ENCODE measurements at regions of chr13 and their contacts with region 1.

Region 1: DNA sequence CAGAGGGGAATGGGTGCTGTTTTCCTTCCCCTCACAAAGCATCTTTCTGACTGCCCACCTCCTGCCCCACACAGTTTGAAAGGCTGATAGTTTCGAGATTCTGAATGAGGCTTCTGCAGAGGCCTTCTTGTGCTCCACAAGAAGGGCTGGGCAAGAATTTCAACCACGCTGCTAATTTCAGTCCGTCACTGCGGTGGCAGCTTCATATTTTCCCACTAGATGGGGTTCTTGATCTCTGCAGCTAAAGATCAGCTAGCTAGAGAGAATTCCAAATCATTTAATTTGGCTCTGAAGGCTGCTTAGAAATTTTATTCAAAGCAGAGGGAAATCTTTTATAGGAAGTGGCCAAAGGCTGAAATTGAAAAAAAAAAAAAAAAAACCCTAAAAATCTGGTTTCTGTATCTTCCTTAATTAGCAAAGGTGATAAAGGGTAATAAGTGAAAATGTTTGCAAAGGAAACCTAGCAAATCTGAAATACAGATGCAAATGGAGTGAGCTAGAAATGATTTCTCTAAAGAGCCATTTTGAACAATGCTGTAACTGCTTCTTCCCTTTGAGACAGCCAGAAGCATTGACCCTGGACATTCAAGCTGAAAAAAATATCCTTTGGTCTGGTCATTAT is 38.0 kb upstream of the C13orf42 start:
- DNase-seq: peak; percentile 45
- ATAC-seq: peak; percentile 90
- H3K4me3 ChIP-seq: no peak overlapping the region
- H3K27ac ChIP-seq: no peak overlapping the region
- H3K4me1 ChIP-seq: no peaks in the 10 kb centered on the region
- H3K27me3 ChIP-seq: peaks cover 24% of the 10 kb centered on the region
- CTCF ChIP-seq: peak; percentile 76
- POLR2A ChIP-seq: no peak
- RAD21 ChIP-seq: peak; percentile 75

Region 2: DNA sequence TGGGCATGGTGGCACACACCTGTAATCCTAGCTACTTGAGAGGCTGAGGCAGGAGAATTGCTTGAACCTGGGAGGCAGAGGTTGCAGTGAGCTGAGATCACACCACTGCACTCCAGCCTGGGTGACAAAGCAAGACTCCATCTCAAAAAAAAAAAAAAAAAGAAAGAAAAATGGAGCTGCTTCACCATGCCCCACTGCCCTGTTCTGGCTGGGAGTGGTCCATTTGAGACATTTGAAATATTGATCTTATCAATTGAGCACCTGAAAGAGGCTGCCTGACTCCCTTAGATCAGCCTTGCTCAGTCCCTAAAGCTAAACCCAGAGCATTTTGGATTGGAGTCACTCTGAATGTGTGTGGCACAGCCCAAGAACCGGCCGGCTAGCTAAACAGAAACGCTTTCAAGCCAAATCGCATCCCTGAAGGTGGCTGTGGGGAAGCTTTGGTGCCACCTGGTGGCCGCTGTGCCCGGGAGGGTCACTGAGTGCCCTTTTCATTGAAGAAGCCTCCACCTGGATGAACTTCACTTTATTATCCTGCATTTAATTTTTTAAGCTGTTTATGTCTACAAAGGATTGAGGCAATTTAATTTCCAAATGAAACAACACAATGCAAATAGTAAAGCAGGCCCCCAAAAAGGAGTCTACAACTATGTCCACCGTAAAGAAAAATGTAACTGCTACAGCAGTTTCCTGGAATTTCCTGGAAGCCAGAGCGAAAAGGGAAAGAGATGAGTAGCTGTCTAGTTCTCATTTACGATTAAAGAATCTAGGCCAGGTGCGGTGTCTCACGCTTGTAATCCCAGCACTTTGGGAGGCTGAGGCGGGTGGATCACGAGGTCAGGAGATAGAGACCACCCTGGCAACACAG is 137.3 kb after region 1 on chr13:
- CTCF ChIA-PET with region 1: interaction called, 37 read pairs
- POLR2A ChIA-PET with region 1: no interaction called
- dilution Hi-C with region 1: no loop called
- in situ Hi-C with region 1: no loop called
- intact Hi-C with region 1: loop called (anchors 1 kb)
- DNase-seq: peak; percentile 43
- ATAC-seq: peak; percentile 98
- H3K4me3 ChIP-seq: no peak overlapping the region
- H3K27ac ChIP-seq: no peak overlapping the region
- H3K4me1 ChIP-seq: no peaks in the 10 kb centered on the region; the same call in 1 of the 2 replicates
- H3K27me3 ChIP-seq: peaks cover 18% of the 10 kb centered on the region
- CTCF ChIP-seq: peak; percentile 81
- POLR2A ChIP-seq: no peak
- RAD21 ChIP-seq: peak; percentile 81

Measured in IMR-90 (cell line).